ENCODE measurements at regions of chr12 and their contacts with region 1.

Region 1: GRCh38 chr12:76031537-76032073 is at the start of gene PHLDA1:
- DNase-seq: peak; percentile 98
- H3K4me3 Mint-ChIP-seq: peak within 1 kb of the TSS; percentile 89
- H3K27ac Mint-ChIP-seq: peak within 1 kb of the TSS; percentile 96
- H3K4me1 Mint-ChIP-seq: peaks cover 29% of the 10 kb centered on the region
- H3K27me3 Mint-ChIP-seq: no peaks in the 10 kb centered on the region
- CTCF ChIP-seq: peak; percentile 71
- total RNA-seq, gene PHLDA1: 183 and 203 TPM in 2 replicates

Region 2: DNA sequence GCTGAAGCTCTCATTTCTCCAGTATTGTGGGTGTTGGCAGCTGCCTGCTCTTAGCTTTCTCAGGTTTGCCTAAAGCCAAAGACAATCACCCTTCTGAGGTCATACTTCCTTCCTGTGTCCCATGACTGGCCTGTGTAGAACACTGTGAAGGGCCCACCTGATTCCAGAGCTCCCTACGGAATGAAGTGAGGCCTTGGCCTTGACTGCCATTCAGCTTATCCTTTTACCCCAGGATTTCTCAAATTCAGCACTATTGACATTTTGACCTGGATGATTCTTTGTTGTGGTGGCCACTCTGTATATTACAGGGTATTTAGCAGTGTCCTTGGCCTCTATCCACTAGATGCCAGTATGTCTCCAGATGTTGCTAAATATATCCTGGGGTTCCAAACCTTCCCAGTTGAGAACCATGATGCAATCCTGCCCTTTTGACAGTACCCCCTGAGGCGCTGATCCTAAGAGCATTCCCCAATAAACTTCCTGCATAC is 407.9 kb before region 1 on chr12:
- CTCF ChIA-PET with region 1: interaction called, 84 read pairs
- POLR2A ChIA-PET with region 1: interaction called, 66 read pairs
- intact Hi-C with region 1: loop called (anchors 1 kb)
- DNase-seq: peak; percentile 97
- H3K4me3 Mint-ChIP-seq: no peak overlapping the region
- H3K27ac Mint-ChIP-seq: peak overlapping the region; percentile 82
- H3K4me1 Mint-ChIP-seq: peaks cover 24% of the 10 kb centered on the region
- H3K27me3 Mint-ChIP-seq: no peaks in the 10 kb centered on the region
- CTCF ChIP-seq: peak; percentile 68

Region 3: DNA sequence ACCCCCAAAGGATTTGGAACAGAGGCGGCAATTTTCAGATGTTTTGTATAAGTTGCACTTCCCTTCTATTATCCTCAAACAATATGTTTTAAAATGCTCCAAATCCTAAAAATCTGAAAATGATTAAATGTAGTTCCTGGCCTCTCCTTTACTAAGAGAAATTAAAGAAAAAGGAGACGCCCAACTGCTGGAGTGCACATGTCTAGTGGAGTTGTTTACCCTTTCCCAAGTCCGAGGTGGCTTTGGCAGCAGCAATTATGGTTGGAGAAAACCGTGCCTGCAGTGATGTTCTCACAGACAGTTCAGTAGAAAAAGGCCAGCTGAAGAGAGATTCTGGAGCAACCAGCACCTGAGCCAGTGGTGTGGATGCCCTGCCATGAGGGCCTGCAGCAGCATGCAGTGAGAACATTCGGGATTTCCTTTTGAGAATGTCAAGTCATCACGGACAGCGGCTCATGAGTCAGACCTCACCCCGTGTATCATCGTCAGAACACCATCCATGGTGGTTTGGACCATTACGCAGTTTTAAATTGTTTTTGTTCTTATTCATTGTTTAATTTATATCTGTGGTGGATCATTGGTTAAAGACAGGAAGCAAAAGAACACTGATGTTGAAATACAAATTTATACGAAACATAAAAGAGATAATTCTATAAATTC is 341.2 kb before region 1 on chr12:
- CTCF ChIA-PET with region 1: no interaction called
- POLR2A ChIA-PET with region 1: interaction called, 3 read pairs
- intact Hi-C with region 1: loop called (anchors 10 kb)
- DNase-seq: peak; percentile 97
- H3K4me3 Mint-ChIP-seq: peak overlapping the region; percentile 45
- H3K27ac Mint-ChIP-seq: peak overlapping the region; percentile 90
- H3K4me1 Mint-ChIP-seq: peaks cover 31% of the 10 kb centered on the region
- H3K27me3 Mint-ChIP-seq: no peaks in the 10 kb centered on the region
- CTCF ChIP-seq: no peak

Region 4: DNA sequence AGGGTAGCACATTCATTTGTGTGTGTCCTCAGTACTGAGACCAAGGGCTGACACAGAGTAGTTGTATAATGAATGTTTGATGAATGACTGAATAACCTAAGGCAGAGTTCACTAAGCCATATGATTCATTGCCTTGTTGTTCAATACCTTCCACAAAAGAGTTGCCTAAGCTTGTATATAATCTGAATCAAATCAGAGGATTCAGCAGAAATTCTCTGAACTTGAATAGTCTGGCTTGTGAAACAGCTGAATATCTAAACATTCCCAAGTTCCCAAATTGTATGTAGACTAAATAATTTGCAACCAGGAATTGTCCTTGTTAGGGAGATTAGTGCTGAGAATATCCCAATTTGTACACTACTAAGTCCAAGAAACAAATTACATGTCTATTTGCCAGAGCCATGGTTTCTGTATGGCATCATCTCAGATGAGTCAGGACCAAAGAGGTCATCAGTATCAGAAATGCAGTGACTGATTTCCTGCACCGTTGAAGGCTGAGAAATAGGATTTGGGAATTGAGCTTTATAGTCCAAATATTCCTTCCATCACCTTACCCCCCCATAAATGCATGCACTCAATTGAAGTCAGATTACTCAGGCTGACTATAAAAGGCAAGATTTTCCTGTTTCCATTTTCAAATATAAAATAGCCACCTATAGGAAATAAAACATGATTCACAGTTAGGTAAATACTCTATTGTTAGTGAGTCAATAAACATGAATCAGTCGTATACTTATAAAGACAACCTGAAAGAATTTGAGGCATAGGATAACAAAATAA is 168.7 kb before region 1 on chr12:
- CTCF ChIA-PET with region 1: no interaction called
- POLR2A ChIA-PET with region 1: interaction called, 12 read pairs
- intact Hi-C with region 1: loop called (anchors 2 kb)
- DNase-seq: peak; percentile 85
- H3K4me3 Mint-ChIP-seq: no peak overlapping the region
- H3K27ac Mint-ChIP-seq: peak overlapping the region; percentile 83
- H3K4me1 Mint-ChIP-seq: peaks cover 19% of the 10 kb centered on the region
- H3K27me3 Mint-ChIP-seq: no peaks in the 10 kb centered on the region
- CTCF ChIP-seq: no peak

Region 5: GRCh38 chr12:75954041-75954440 is 77.6 kb before region 1 on chr12:
- CTCF ChIA-PET with region 1: interaction called, 4 read pairs
- POLR2A ChIA-PET with region 1: interaction called, 17 read pairs
- intact Hi-C with region 1: no loop called
- DNase-seq: peak; percentile 88
- H3K4me3 Mint-ChIP-seq: no peak overlapping the region
- H3K27ac Mint-ChIP-seq: peak overlapping the region; percentile 77
- H3K4me1 Mint-ChIP-seq: peaks cover 14% of the 10 kb centered on the region
- H3K27me3 Mint-ChIP-seq: no peaks in the 10 kb centered on the region
- CTCF ChIP-seq: no peak

Region 6: DNA sequence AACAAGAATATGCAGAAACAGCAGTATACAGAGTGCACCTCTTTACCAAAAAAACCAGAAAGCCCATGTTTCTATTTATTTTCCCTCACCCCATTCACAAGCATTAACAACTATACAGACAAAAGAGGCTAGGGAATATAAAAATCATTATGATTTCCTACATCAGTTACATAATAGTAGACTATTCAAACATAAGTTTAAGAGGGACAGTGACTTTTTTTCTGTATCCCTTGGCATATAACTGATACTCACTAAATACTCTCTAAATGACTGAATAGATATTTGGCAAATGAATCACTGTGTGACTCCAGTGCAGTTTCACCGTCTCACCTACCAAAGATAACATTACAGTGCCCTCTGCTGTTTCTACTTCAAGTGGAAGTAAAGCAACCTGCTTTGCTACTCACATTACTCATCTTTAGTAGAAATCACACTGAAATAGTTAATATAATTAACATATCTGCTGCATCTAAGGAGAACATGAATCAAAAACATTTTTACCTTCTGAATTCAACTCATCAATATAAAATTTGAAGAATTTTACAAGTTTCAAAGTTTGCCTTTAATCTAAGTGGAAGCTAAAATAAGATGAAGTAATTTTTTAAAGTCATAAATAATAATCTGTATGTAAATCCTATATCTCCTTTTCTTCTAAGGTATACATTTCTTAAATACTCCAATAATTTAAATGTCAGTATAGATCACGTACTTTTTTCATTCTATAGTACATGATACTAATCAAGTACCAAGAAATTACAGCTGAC is 424.2 kb after region 1 on chr12:
- CTCF ChIA-PET with region 1: interaction called, 8 read pairs
- POLR2A ChIA-PET with region 1: interaction called, 7 read pairs
- intact Hi-C with region 1: loop called (anchors 5 kb)
- DNase-seq: peak; percentile 87
- H3K4me3 Mint-ChIP-seq: no peak overlapping the region
- H3K27ac Mint-ChIP-seq: peak overlapping the region; percentile 84
- H3K4me1 Mint-ChIP-seq: peaks cover 21% of the 10 kb centered on the region
- H3K27me3 Mint-ChIP-seq: no peaks in the 10 kb centered on the region
- CTCF ChIP-seq: peak; percentile 49

Measured in MCF 10A (cell line).